T-cell (primary cell): ENCODE measurements at regions of chr13 and their contacts with region 1.

Region 1: GRCh38 chr13:99269627-99270241 is 11.6 kb upstream of the GPR18 start:
- DNase-seq: peak in 16 of 35 experiments; percentile 15 to 81 (median 25)
- ATAC-seq: peak; percentile 66 to 81 (median 70)
- H3K4me3 ChIP-seq: no peak overlapping the region
- H3K4me3 Mint-ChIP-seq: no peak overlapping the region
- H3K27ac ChIP-seq: peak overlapping the region; percentile 87
- H3K27ac Mint-ChIP-seq: peak overlapping the region; percentile 84 to 87
- H3K4me1 ChIP-seq: peaks cover 26 to 32% of the 10 kb centered on the region in 2 experiments
- H3K4me1 Mint-ChIP-seq: peaks cover 63 to 65% (median 64%) of the 10 kb centered on the region in 3 donors
- H3K27me3 ChIP-seq: no peaks in the 10 kb centered on the region
- H3K27me3 Mint-ChIP-seq: no peaks in the 10 kb centered on the region

Region 2: DNA sequence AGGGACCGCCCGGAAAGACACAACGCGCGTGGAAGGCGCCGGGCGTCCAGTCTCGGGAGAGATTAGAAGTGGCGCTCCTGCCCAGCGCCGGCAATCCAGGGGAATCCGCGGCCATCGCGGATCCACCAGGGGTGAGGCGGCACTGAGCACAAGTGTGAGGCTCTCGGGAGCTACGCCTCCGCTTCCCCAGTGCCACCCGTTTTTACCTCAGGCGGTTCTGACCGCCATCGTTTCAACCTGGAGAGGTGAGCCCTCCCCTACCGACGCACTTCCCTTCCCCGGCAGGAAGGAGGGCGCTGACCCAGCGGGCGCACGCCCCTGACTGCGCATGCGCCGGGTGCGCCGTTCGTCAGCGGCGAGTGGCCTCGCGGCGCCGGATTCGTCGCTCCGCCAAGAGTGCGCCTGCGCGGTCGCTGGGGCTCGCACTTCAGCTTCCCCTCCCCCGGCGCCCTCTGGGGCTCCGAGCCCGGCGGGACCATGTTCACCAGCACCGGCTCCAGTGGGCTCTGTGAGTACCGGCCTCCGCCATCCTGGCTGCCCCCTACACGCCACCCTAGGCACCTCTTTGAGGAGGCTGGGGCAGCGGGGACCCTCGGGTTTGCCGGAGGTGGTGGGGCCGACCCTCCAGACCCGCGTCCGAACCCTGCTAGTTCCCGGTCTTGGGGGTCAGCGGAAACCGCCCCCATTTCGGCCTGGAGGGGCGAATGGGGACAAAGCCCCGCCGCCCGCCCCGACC is 69.1 kb before region 1 on chr13 and contains the start of gene UBAC2:
- CTCF ChIA-PET with region 1: interaction called, 9 to 128 read pairs
- POLR2A ChIA-PET with region 1: interaction called, 3 to 6 read pairs
- DNase-seq: peak; percentile 92 to 100 (median 96)
- ATAC-seq: peak; percentile 82 to 85 (median 82)
- H3K4me3 ChIP-seq: peak within 1 kb of the TSS; percentile 93 to 97
- H3K4me3 Mint-ChIP-seq: peak within 1 kb of the TSS; percentile 85 to 99 (median 99)
- H3K27ac ChIP-seq: peak within 1 kb of the TSS; percentile 99
- H3K27ac Mint-ChIP-seq: peak within 1 kb of the TSS; percentile 94 to 98
- H3K4me1 ChIP-seq: peaks cover 33 to 50% of the 10 kb centered on the region in 2 experiments
- H3K4me1 Mint-ChIP-seq: peaks cover 62 to 68% (median 67%) of the 10 kb centered on the region in 3 donors
- H3K27me3 ChIP-seq: no peaks in the 10 kb centered on the region
- H3K27me3 Mint-ChIP-seq: no peaks in the 10 kb centered on the region
- total RNA-seq, gene UBAC2: 83.3 to 99.3 (median 84.9) TPM

Region 3: GRCh38 chr13:99281811-99282263 is 12.1 kb after region 1 on chr13:
- CTCF ChIA-PET with region 1: interaction called, 7 to 19 read pairs
- POLR2A ChIA-PET with region 1: interaction called, 5 to 15 read pairs
- DNase-seq: peak; percentile 26 to 73 (median 58)
- ATAC-seq: peak; percentile 74 to 80 (median 79)
- H3K4me3 ChIP-seq: peak overlapping the region in 1 of 2 donors; percentile 28
- H3K4me3 Mint-ChIP-seq: peak overlapping the region; percentile 29 to 69 (median 55)
- H3K27ac ChIP-seq: peak overlapping the region; percentile 86
- H3K27ac Mint-ChIP-seq: peak overlapping the region; percentile 99
- H3K4me1 ChIP-seq: peaks cover 59 to 73% of the 10 kb centered on the region in 2 experiments
- H3K4me1 Mint-ChIP-seq: peaks cover 93 to 99% (median 95%) of the 10 kb centered on the region in 3 donors
- H3K27me3 ChIP-seq: no peaks in the 10 kb centered on the region
- H3K27me3 Mint-ChIP-seq: no peaks in the 10 kb centered on the region

Region 4: GRCh38 chr13:99314640-99315176 is 45.0 kb after region 1 on chr13:
- CTCF ChIA-PET with region 1: interaction called, 5 to 14 read pairs
- POLR2A ChIA-PET with region 1: interaction called in 1 of 2 experiments, 9 read pairs
- DNase-seq: peak in 32 of 35 experiments; percentile 19 to 84 (median 58)
- ATAC-seq: peak; percentile 68 to 86 (median 76)
- H3K4me3 ChIP-seq: peak overlapping the region; percentile 35 to 49
- H3K4me3 Mint-ChIP-seq: peak overlapping the region; percentile 60 to 76 (median 69)
- H3K27ac ChIP-seq: peak overlapping the region; percentile 91
- H3K27ac Mint-ChIP-seq: peak overlapping the region; percentile 95 to 96
- H3K4me1 ChIP-seq: peaks cover 54 to 61% of the 10 kb centered on the region in 2 experiments
- H3K4me1 Mint-ChIP-seq: peaks cover 78 to 85% (median 82%) of the 10 kb centered on the region in 3 donors
- H3K27me3 ChIP-seq: no peaks in the 10 kb centered on the region
- H3K27me3 Mint-ChIP-seq: no peaks in the 10 kb centered on the region

Region 5: GRCh38 chr13:99374994-99375737 is 105.4 kb after region 1 on chr13:
- CTCF ChIA-PET with region 1: interaction called, 6 to 14 read pairs
- POLR2A ChIA-PET with region 1: interaction called, 4 read pairs
- DNase-seq: peak in 34 of 35 experiments; percentile 50 to 93 (median 84)
- ATAC-seq: peak; percentile 64 to 92 (median 70)
- H3K4me3 ChIP-seq: no peak overlapping the region
- H3K4me3 Mint-ChIP-seq: peak overlapping the region; percentile 49 to 72 (median 51)
- H3K27ac ChIP-seq: peak overlapping the region; percentile 88
- H3K27ac Mint-ChIP-seq: peak overlapping the region; percentile 98 to 100
- H3K4me1 ChIP-seq: peaks cover 68 to 69% of the 10 kb centered on the region in 2 experiments
- H3K4me1 Mint-ChIP-seq: peaks cover 87 to 94% (median 94%) of the 10 kb centered on the region in 3 donors
- H3K27me3 ChIP-seq: no peaks in the 10 kb centered on the region
- H3K27me3 Mint-ChIP-seq: no peaks in the 10 kb centered on the region

Region 6: DNA sequence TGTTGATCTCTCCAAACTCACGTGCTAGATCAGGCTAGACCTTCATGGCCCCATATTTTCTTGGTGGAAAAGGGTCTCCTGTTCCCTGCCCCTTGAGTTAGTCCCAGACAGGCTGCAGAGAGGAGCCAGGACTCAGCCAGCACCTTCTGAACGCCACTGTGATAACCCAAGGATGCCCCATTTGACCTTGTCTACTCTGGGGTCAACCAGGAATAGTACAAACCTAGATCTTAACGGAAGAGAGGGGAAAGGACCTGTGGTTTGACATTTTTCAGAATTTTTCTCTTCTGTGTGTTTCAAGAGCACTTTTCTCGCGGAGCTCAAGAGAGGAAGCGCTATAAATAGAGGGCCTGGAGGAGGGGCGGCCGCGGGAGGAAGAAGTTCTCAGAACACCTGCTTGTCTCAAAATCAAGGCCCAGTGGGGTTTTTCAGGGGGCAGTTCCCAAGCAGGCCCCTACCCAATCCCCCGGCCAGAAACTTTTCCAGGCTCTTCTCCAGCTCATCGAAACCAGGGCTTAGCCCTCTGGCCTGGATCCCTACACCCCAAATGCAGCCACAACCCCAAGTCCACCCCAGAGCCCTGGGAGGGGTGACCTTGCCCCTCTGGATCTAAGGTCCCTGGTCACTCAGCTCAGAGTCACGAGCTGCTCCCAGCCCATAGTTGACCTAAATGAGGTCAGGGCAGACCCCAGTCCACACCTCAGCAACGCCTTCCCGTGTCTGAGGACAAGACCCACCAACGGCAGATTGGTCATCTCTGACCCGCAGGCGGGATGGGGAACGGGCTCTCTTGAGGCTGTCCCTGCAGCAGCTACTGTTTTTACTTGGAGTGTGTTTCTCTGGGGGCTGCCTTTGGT is 156.0 kb after region 1 on chr13:
- CTCF ChIA-PET with region 1: interaction called in 1 of 2 experiments, 12 read pairs
- POLR2A ChIA-PET with region 1: interaction called in 1 of 2 experiments, 3 read pairs
- DNase-seq: peak in 22 of 35 experiments; percentile 27 to 67 (median 56)
- ATAC-seq: peak; percentile 71 to 81 (median 74)
- H3K4me3 ChIP-seq: peak overlapping the region in 1 of 2 donors; percentile 6
- H3K4me3 Mint-ChIP-seq: peak overlapping the region; percentile 26 to 80 (median 61)
- H3K27ac ChIP-seq: peak overlapping the region; percentile 90
- H3K27ac Mint-ChIP-seq: peak overlapping the region; percentile 85 to 91
- H3K4me1 ChIP-seq: peaks cover 41 to 63% of the 10 kb centered on the region in 2 experiments
- H3K4me1 Mint-ChIP-seq: peaks cover 61 to 65% (median 63%) of the 10 kb centered on the region in 3 donors
- H3K27me3 ChIP-seq: no peaks in the 10 kb centered on the region
- H3K27me3 Mint-ChIP-seq: no peaks in the 10 kb centered on the region